ENCODE measurements at regions of chr14 and their contacts with region 1.

Region 1: GRCh38 chr14:75577729-75578101 is 705 bp upstream of the FLVCR2 start:
- DNase-seq: peak; percentile 87
- ATAC-seq: peak; percentile 92
- H3K4me3 Mint-ChIP-seq: no peak overlapping the region; the same call in 1 of the 2 replicates
- H3K27ac Mint-ChIP-seq: peak overlapping the region; percentile 78
- H3K4me1 Mint-ChIP-seq: no peaks in the 10 kb centered on the region; the same call in 1 of the 2 replicates
- H3K27me3 Mint-ChIP-seq: no peaks in the 10 kb centered on the region; the same call in none of the 2 replicates
- CTCF ChIP-seq: no peak

Region 2: DNA sequence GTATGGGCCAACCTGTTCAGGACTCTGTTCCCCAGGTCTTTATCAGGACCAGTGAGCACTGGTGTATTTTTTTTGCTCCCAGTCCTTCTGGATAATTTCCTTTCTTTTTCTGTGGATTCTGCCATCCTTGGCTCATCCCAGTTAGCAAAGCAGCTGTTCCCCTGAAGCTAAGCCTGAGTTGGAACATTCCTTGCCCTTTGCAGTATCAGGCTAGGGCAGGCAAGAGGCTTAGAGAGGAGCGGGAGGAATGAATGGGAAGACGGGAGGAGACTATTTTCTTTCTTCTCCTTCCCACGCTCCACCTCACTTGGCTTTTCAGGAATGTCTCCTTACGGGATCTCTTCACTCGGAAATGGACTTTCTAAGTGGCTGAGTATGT is 53.7 kb after region 1 on chr14:
- CTCF ChIA-PET with region 1: interaction called, 15 read pairs
- POLR2A ChIA-PET with region 1: no interaction called
- DNase-seq: peak; percentile 28
- ATAC-seq: peak; percentile 71
- H3K4me3 Mint-ChIP-seq: peak overlapping the region; percentile 59
- H3K27ac Mint-ChIP-seq: peak overlapping the region; percentile 99
- H3K4me1 Mint-ChIP-seq: peaks cover 64% of the 10 kb centered on the region
- H3K27me3 Mint-ChIP-seq: no peaks in the 10 kb centered on the region
- CTCF ChIP-seq: no peak

Region 3: GRCh38 chr14:75640879-75641278 is 63.2 kb after region 1 on chr14:
- CTCF ChIA-PET with region 1: interaction called, 12 read pairs
- POLR2A ChIA-PET with region 1: no interaction called
- DNase-seq: no peak
- ATAC-seq: no peak
- H3K4me3 Mint-ChIP-seq: no peak overlapping the region
- H3K27ac Mint-ChIP-seq: no peak overlapping the region
- H3K4me1 Mint-ChIP-seq: peaks cover 12% of the 10 kb centered on the region
- H3K27me3 Mint-ChIP-seq: no peaks in the 10 kb centered on the region
- CTCF ChIP-seq: no peak

Region 4: DNA sequence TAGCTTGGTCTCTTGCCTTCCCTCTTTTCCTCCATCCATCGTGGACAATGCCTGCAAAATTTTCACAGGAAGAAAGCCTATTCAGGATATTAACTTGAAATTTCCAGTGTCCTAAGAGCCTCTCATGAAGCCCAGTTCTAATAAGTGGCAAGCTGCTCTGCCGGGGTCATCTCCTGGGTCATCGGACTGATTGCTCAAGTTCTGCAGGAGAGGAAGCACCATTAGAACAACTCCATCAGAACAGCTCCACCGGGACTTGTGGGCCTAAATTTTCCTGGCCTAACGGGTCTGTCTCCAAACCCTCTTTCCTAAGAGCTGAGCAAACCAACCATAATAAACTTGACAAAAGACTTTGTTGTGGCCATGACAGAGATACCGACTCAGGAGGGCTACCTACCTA is 69.0 kb after region 1 on chr14:
- CTCF ChIA-PET with region 1: interaction called, 198 read pairs
- POLR2A ChIA-PET with region 1: no interaction called
- DNase-seq: no peak
- ATAC-seq: no peak
- H3K4me3 Mint-ChIP-seq: no peak overlapping the region
- H3K27ac Mint-ChIP-seq: no peak overlapping the region
- H3K4me1 Mint-ChIP-seq: no peaks in the 10 kb centered on the region
- H3K27me3 Mint-ChIP-seq: no peaks in the 10 kb centered on the region
- CTCF ChIP-seq: no peak

Region 5: GRCh38 chr14:75654127-75654732 is 76.5 kb after region 1 on chr14:
- CTCF ChIA-PET with region 1: interaction called, 198 read pairs
- POLR2A ChIA-PET with region 1: interaction called, 7 read pairs
- DNase-seq: peak; percentile 86
- ATAC-seq: peak; percentile 92
- H3K4me3 Mint-ChIP-seq: no peak overlapping the region
- H3K27ac Mint-ChIP-seq: no peak overlapping the region
- H3K4me1 Mint-ChIP-seq: peaks cover 4% of the 10 kb centered on the region; the same call in 1 of the 2 replicates
- H3K27me3 Mint-ChIP-seq: no peaks in the 10 kb centered on the region
- CTCF ChIP-seq: peak; percentile 98

Region 6: GRCh38 chr14:75660630-75661494 is 83.1 kb after region 1 on chr14 and contains the starts of genes ERG28 and TTLL5:
- CTCF ChIA-PET with region 1: interaction called, 198 read pairs
- POLR2A ChIA-PET with region 1: interaction called, 17 read pairs
- DNase-seq: peak; percentile 97
- ATAC-seq: peak; percentile 96
- H3K4me3 Mint-ChIP-seq: peak within 1 kb of the TSS; percentile 92
- H3K27ac Mint-ChIP-seq: peak within 1 kb of the TSS; percentile 95
- H3K4me1 Mint-ChIP-seq: peaks cover 17% of the 10 kb centered on the region
- H3K27me3 Mint-ChIP-seq: no peaks in the 10 kb centered on the region
- CTCF ChIP-seq: no peak
- total RNA-seq, gene ERG28: 27.9 to 29.9 TPM (median 29.4 TPM) in 3 replicates
- total RNA-seq, gene TTLL5: 39.6 to 42.6 TPM (median 40.8 TPM) in 3 replicates

Region 7: DNA sequence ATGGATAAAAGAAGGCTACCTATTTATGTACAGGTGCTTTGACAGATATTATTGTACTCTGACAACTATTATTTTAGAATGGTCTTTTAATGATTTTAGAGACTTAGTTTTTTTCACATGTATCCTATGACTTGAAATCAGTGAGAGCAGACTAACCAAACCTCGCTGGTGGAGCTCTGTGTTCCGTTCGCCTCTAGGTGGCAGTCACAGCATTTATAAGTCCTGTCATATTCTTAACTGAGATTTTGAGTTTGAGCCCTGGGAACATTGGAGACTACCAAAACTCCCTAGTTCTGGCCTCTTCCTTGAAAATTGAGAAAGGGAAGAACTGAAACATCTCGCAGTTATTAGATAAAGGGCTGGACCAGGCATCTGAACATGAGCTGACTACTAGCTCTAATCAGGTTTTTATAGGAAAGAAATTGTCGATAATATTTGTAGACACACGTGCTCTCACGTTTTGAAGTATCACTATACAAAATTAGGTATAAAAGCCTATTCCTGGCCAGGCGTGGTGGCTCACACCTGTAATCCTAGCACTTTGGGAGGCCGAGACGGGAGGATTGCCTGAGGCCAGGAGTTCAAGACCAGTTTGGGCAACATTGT is 131.6 kb after region 1 on chr14:
- CTCF ChIA-PET with region 1: interaction called, 25 read pairs
- POLR2A ChIA-PET with region 1: no interaction called
- DNase-seq: peak; percentile 72
- ATAC-seq: peak; percentile 74
- H3K4me3 Mint-ChIP-seq: no peak overlapping the region
- H3K27ac Mint-ChIP-seq: peak overlapping the region; percentile 73; the same call in 1 of the 2 replicates
- H3K4me1 Mint-ChIP-seq: peaks cover 14% of the 10 kb centered on the region
- H3K27me3 Mint-ChIP-seq: no peaks in the 10 kb centered on the region
- CTCF ChIP-seq: peak; percentile 67

Measured in WTC11 (cell line).